ENCODE measurements at regions of chr2 and their contacts with region 1.

Region 1: DNA sequence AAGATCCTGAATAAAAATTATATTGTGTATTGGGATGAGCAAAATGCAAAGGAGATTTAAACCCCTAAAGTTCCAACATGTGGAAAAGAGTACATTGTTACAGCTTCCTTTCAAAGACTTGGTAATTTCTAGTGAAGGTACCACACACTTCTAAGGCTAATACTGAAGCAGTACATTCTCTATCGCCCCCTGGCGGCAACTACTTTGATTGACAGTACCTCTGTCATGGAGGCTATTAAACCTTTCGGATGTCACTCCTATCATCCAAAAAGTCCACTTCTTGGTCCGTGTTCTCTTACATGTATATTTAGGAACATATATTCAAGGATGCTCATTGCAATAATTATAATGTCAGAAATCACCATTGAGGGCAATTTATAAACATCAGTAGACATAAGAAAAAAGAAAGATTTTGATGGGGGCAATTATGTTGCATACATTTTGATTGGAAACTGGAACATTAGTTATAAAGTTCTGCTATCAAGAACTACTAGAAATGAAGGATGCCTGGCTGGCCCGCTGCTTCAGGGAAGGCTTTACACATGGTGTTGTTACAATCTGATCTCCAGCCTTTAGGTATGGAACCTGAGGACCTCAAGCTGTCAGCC is 601.6 kb downstream of the CPS1 start:
- DNase-seq: peak; percentile 83
- ATAC-seq: peak; percentile 92
- H3K4me3 Mint-ChIP-seq: no peak overlapping the region
- H3K27ac Mint-ChIP-seq: no peak overlapping the region
- H3K4me1 Mint-ChIP-seq: no peaks in the 10 kb centered on the region
- H3K27me3 Mint-ChIP-seq: no peaks in the 10 kb centered on the region
- CTCF ChIP-seq: peak; percentile 82

Region 2: GRCh38 chr2:210955591-210955990 is 202.4 kb before region 1 on chr2:
- CTCF ChIA-PET with region 1: no interaction called
- POLR2A ChIA-PET with region 1: no interaction called
- DNase-seq: no peak
- ATAC-seq: no peak
- H3K4me3 Mint-ChIP-seq: no peak overlapping the region
- H3K27ac Mint-ChIP-seq: no peak overlapping the region
- H3K4me1 Mint-ChIP-seq: no peaks in the 10 kb centered on the region
- H3K27me3 Mint-ChIP-seq: no peaks in the 10 kb centered on the region; the same call in 1 of the 2 replicates
- CTCF ChIP-seq: no peak

Region 3: GRCh38 chr2:211086049-211086448 is 71.9 kb before region 1 on chr2:
- CTCF ChIA-PET with region 1: interaction called, 12 read pairs
- POLR2A ChIA-PET with region 1: no interaction called
- DNase-seq: no peak
- ATAC-seq: peak; percentile 60
- H3K4me3 Mint-ChIP-seq: no peak overlapping the region
- H3K27ac Mint-ChIP-seq: no peak overlapping the region
- H3K4me1 Mint-ChIP-seq: 0 out of 2 replicates have a peak, but pooled peaks cover 2% of the 10 kb centered on the region
- H3K27me3 Mint-ChIP-seq: no peaks in the 10 kb centered on the region
- CTCF ChIP-seq: no peak

Measured in WTC11 (cell line).